ENCODE measurements at regions of chr10 and their contacts with region 1.

Region 1: GRCh38 chr10:123967396-123968243 is 76.0 kb upstream of the CPXM2 start:
- DNase-seq: peak; percentile 40 to 87 (median 79)
- H3K4me3 ChIP-seq: no peak overlapping the region
- H3K27ac ChIP-seq: peak overlapping the region in 11 of 59 donors; percentile 1 to 65 (median 27)
- H3K27me3 ChIP-seq: peaks cover 0 to 45% (median 16%) of the 10 kb centered on the region in 45 donors
- CTCF ChIP-seq: peak; percentile 75 to 99 (median 96)

Region 2: GRCh38 chr10:123132576-123133477 is 834.8 kb before region 1 on chr10:
- intact Hi-C with region 1: loop called in 1 of 2 experiments (anchors 5 kb)
- DNase-seq: peak; percentile 68 to 86 (median 81)
- H3K4me3 ChIP-seq: peak overlapping the region in 43 of 59 donors; percentile 2 to 63 (median 31)
- H3K27ac ChIP-seq: no peak overlapping the region
- H3K27me3 ChIP-seq: peaks cover 31 to 98% (median 71%) of the 10 kb centered on the region in 45 donors
- CTCF ChIP-seq: peak; percentile 40 to 98 (median 90)

Region 3: GRCh38 chr10:123582084-123582989 is 385.3 kb before region 1 on chr10:
- intact Hi-C with region 1: loop called (anchors 1 kb)
- DNase-seq: peak; percentile 50 to 90 (median 82)
- H3K4me3 ChIP-seq: no peak overlapping the region
- H3K27ac ChIP-seq: no peak overlapping the region
- H3K27me3 ChIP-seq: peaks cover 0 to 42% (median 12%) of the 10 kb centered on the region in 45 donors
- CTCF ChIP-seq: peak; percentile 63 to 95 (median 87)

Region 4: DNA sequence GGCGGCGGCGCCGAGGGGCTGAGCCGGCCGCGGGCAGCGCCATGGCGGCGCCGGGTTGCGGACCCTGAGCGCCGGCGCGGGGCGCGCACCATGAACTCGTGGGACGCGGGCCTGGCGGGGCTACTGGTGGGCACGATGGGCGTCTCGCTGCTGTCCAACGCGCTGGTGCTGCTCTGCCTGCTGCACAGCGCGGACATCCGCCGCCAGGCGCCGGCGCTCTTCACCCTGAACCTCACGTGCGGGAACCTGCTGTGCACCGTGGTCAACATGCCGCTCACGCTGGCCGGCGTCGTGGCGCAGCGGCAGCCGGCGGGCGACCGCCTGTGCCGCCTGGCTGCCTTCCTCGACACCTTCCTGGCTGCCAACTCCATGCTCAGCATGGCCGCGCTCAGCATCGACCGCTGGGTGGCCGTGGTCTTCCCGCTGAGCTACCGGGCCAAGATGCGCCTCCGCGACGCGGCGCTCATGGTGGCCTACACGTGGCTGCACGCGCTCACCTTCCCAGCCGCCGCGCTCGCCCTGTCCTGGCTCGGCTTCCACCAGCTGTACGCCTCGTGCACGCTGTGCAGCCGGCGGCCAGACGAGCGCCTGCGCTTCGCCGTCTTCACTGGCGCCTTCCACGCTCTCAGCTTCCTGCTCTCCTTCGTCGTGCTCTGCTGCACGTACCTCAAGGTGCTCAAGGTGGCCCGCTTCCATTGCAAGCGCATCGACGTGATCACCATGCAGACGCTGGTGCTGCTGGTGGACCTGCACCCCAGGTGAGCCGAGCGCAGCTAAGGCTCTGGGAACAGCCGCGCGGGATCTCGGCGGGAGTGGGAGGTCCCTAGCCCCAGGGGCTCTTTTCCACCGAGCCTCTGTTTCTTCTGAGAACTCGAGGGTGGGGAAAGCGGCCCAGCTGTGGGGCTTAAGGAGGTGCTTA is 301.0 kb before region 1 on chr10 and contains the start of gene GPR26:
- intact Hi-C with region 1: loop called in 1 of 2 experiments (anchors 5 kb)
- DNase-seq: no peak
- H3K4me3 ChIP-seq: peak within 1 kb of the TSS in 39 of 59 donors; percentile 4 to 56 (median 32)
- H3K27ac ChIP-seq: peak within 1 kb of the TSS in 1 of 59 donors; percentile 53
- H3K27me3 ChIP-seq: peaks cover 0 to 78% (median 29%) of the 10 kb centered on the region in 45 donors
- CTCF ChIP-seq: no peak
- total RNA-seq, gene GPR26: 1.2 to 23.5 (median 10.2) TPM

Measured in dorsolateral prefrontal cortex (tissue), 120 donors.